A549 (cell line): ENCODE measurements at regions of chr5 and their contacts with region 1.

Region 1: GRCh38 chr5:96601811-96602244 is 60.3 kb upstream of the CAST start:
- DNase-seq: peak; percentile 68 to 75
- ATAC-seq: peak; percentile 88 to 96
- H3K4me3 ChIP-seq: no peak overlapping the region
- H3K27ac ChIP-seq: peak overlapping the region; percentile 62 to 75
- H3K4me1 ChIP-seq: 0 out of 3 replicates have a peak, but pooled peaks cover 13% of the 10 kb centered on the region
- CTCF ChIP-seq: peak; percentile 85
- EP300 ChIP-seq: no peak
- POLR2A ChIP-seq: no peak
- RAD21 ChIP-seq: peak; percentile 86 to 89

Region 2: GRCh38 chr5:96381526-96381925 is 220.3 kb before region 1 on chr5:
- CTCF ChIA-PET with region 1: interaction called, 16 read pairs
- POLR2A ChIA-PET with region 1: no interaction called
- DNase-seq: peak in 1 of 2 experiments; percentile 27
- ATAC-seq: peak; percentile 58 to 66; a peak in 3 of 6 replicates
- H3K4me3 ChIP-seq: no peak overlapping the region
- H3K27ac ChIP-seq: 0 out of 6 replicates have a peak overlapping the region, but pooled peaks of 1 of the 2 experiments have one; percentile 26
- H3K4me1 ChIP-seq: peaks cover 18% of the 10 kb centered on the region
- CTCF ChIP-seq: peak; percentile 19; the same call in 1 of the 3 replicates
- EP300 ChIP-seq: no peak
- POLR2A ChIP-seq: no peak
- RAD21 ChIP-seq: peak in 1 of 2 experiments; percentile 52; a peak in 2 of 5 replicates

Region 3: GRCh38 chr5:96582343-96582742 is 19.5 kb before region 1 on chr5:
- CTCF ChIA-PET with region 1: interaction called, 28 read pairs
- POLR2A ChIA-PET with region 1: no interaction called
- DNase-seq: no peak
- ATAC-seq: no peak; a peak in 1 of 6 replicates
- H3K4me3 ChIP-seq: no peak overlapping the region
- H3K27ac ChIP-seq: peak overlapping the region in 1 of 2 experiments; percentile 65; a peak in 1 of 6 replicates
- H3K4me1 ChIP-seq: peaks cover 14% of the 10 kb centered on the region; the same call in 1 of the 3 replicates
- CTCF ChIP-seq: no peak
- EP300 ChIP-seq: no peak
- POLR2A ChIP-seq: no peak
- RAD21 ChIP-seq: no peak

Region 4: DNA sequence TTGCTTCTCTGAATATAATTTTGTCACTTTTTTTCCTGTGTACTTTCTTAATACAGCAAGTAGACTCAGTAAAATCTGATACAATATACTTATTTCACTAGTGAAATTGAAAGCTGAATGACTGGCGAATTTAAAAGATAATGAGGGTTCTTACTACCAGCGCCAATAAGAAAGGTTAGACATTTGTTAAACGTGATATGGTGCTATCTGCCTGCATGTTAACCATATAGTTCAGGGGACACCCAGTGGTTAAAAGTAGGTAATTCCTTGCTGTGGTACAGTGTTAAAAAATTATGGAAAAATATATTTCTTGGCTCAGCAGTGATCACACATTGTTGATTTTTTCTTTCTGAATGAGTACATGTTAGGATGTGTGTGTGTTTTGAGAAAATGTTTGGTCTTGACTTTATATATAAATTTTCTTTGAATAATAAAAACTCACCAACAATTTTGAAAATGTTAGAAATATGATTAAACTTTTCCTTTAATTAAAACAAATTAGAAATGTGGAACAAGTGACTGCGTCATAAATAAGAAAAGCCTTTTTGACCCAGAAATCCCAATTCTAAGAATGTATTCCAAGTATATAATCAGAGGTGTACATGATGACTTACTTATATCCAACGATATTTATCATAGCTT is 86.1 kb after region 1 on chr5:
- CTCF ChIA-PET with region 1: interaction called, 10 read pairs
- POLR2A ChIA-PET with region 1: no interaction called
- DNase-seq: peak; percentile 72 to 79
- ATAC-seq: peak; percentile 88 to 95
- H3K4me3 ChIP-seq: peak overlapping the region; percentile 11; the same call in 1 of the 3 replicates
- H3K27ac ChIP-seq: peak overlapping the region in 1 of 2 experiments; percentile 47; a peak in 1 of 6 replicates
- H3K4me1 ChIP-seq: peaks cover 44% of the 10 kb centered on the region; the same call in 2 of the 3 replicates
- CTCF ChIP-seq: peak; percentile 79
- EP300 ChIP-seq: no peak
- POLR2A ChIP-seq: no peak
- RAD21 ChIP-seq: peak; percentile 85 to 88